ENCODE measurements at regions of chr1 and their contacts with region 1.

Region 1: DNA sequence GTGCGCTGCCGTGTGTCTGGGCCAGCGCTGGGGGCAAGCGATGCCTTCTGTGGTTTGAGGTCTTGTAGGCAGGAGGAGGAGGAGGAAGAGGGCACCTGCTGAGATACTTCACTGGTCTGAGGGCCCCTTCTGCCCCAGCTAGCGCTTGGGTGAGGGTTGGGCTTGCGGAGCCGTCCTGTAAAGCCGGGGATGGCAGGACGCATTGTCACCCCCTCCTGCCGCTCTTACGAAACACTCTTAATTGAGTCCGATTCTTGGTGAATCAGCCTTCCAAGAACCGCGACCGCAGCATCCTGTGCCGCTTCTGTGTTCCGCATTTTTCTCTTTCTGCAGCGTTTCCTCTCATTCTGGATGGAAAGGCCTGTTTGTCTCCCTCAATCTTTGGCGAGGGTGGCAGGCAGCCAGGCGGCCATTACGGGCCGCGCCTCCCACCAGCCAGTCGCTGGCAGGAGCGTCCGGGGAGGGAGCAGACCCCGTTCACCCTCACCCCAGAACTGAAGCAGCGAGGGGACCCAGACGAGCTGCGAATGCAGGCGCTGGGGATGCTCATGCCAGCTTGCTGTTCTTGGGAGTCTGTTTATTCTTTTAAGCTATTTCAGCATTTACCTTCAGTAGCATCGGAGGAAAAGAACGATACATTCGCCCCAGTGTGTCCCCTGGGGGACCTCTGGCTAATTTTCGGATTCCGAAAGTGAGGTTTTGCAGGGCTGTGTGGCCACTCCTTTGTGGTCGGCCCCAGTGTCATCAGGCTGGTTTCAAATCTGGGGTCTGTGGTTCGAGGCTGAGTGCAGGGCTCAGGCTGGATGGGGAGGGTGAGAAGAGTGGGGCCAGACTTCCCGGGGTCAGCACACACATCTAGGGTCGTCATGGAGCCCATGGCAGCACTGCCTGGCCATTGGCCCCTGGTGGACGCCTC is 62.7 kb downstream of the SKI start:
- DNase-seq: peak; percentile 71 to 96
- H3K4me3 ChIP-seq: peak overlapping the region; percentile 37 to 50
- H3K27ac ChIP-seq: peak overlapping the region; percentile 86 to 89
- H3K4me1 ChIP-seq: peaks cover 38 to 83% of the 10 kb centered on the region in 2 donors
- H3K27me3 ChIP-seq: no peaks in the 10 kb centered on the region
- CTCF ChIP-seq: no peak

Region 2: GRCh38 chr1:1615256-1616044 is 675.4 kb before region 1 on chr1 and contains the start of gene MIB2:
- intact Hi-C with region 1: no loop called
- DNase-seq: peak; percentile 74 to 97
- H3K4me3 ChIP-seq: peak within 1 kb of the TSS; percentile 97 to 100
- H3K27ac ChIP-seq: peak within 1 kb of the TSS; percentile 100
- H3K4me1 ChIP-seq: peaks cover 15 to 25% of the 10 kb centered on the region in 2 donors
- H3K27me3 ChIP-seq: no peaks in the 10 kb centered on the region
- CTCF ChIP-seq: peak in 1 of 3 experiments; percentile 18
- total RNA-seq, gene MIB2: 96.9 TPM

Region 3: DNA sequence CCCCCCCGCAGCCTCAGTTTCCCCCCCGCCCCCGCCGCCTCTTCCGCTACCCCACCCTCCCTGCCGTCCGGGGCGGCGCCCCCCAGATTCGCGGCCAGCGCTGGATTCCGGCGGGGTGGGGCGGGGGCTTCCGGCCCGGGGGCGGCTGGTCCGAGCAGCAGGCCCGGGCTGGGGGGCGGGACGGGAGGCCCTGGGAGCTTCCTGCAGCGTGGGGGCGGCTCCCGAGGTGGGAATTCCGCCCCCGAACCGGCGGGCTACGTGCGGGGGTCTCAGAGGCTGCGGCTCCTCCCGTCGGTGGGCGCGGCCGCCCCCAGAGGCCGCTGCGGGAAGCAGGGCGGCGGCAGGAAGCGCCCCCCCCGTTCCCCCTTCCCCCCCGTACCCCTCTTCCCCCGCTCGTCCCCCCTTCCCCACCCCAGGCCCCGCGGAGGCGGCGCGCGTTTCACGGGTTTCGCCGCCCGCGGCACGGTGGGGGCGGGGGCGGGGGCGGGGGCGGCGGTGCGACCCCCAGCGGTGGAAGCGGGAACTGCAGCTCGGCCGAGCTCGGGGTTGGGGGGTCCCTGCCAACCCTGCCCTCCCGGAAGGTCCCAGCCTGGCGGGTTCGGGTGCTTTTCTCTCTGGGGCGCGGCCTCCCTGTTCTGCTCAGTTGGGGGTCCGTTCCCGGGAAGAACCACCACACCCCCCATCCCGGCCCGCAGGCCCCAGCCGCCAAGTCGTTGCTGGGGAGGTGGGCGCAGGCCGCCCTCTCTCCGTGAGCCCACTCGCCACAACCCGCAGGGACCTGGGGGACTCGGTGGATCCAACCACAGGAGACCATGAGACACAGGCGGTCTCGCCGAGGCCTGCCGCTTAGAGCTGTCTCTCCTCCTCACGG is 24.2 kb after region 1 on chr1:
- intact Hi-C with region 1: loop called (anchors 1 kb)
- DNase-seq: no peak
- H3K4me3 ChIP-seq: peak overlapping the region; percentile 80 to 81
- H3K27ac ChIP-seq: peak overlapping the region; percentile 92 to 95
- H3K4me1 ChIP-seq: peaks cover 28 to 73% of the 10 kb centered on the region in 2 donors
- H3K27me3 ChIP-seq: no peaks in the 10 kb centered on the region
- CTCF ChIP-seq: peak; percentile 81 to 95 (median 91)

Region 4: DNA sequence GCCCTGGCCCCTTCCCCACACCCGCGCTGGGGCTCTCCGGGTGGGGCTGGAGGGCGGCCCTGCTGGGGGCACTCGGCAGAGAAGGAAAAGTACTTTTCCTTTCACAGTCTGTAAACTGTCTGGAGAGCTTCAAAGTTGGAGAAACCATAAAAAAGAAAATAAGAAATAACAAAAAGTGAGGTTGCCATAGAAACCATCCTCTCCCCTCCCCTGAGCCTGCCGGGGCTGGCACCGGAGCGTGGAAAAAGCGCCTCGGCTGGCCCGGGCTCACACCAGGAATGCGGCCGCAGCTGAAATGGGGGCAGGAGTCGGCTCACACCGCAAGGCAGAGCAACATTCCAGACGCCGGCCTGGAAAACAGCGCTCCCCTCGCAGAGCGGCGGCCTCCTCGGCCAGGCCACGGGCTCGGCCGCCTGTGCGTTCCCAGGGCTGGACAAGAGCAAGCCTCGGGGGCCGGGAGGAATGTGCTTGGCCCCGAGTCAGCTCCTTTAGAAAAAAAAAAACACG is 31.3 kb after region 1 on chr1:
- intact Hi-C with region 1: loop called (anchors 1 kb)
- DNase-seq: peak; percentile 52 to 94
- H3K4me3 ChIP-seq: peak overlapping the region; percentile 28 to 54
- H3K27ac ChIP-seq: peak overlapping the region; percentile 92 to 96
- H3K4me1 ChIP-seq: peaks cover 24 to 40% of the 10 kb centered on the region in 2 donors
- H3K27me3 ChIP-seq: no peaks in the 10 kb centered on the region
- CTCF ChIP-seq: peak in 2 of 3 experiments; percentile 20 to 26